T-cell (primary cell): ENCODE measurements at regions of chr2 and their contacts with region 1.

Region 1: DNA sequence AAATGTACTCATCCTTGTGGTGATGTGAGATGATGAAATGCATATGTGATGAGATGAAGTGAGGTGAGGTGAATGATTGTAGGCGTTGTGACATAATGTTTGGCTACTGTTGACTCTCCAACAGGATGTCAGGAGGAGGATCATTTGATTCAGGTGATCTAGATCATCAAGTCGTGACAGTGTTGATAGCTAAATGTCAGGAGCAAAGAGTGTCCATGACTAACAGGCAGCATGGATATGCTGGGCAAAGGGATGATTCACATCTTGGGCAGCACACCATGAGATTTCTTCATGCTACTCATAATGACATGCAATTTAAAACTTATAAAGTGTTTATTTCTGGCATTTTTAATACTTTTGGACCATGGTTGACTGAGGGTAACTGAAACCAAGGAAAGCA is 40.2 kb upstream of the UBXN4 start:
- DNase-seq: no peak
- ATAC-seq: no peak
- H3K4me3 ChIP-seq: no peak overlapping the region
- H3K4me3 Mint-ChIP-seq: no peak overlapping the region
- H3K27ac ChIP-seq: no peak overlapping the region
- H3K27ac Mint-ChIP-seq: no peak overlapping the region
- H3K4me1 ChIP-seq: no peaks in the 10 kb centered on the region
- H3K4me1 Mint-ChIP-seq: no peaks in the 10 kb centered on the region
- H3K27me3 ChIP-seq: no peaks in the 10 kb centered on the region
- H3K27me3 Mint-ChIP-seq: no peaks in the 10 kb centered on the region

Region 2: DNA sequence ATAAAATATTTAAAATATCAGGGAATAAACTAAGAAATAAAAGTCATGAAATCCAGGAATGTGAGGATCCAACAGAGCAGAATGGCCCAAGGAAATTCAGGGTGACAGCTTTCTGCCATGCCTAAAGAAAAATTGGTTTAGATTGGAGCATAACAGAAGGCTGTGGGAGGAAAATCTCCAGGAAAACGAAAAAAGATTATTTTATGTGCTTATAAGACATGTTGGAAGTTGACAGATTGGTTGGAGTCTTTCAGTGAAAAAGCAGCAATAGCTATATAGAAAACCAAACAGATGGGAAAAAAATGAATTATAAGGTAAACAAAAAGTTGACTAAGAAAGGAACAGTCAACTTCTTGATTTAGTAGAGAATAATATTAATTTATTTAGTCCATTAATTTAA is 374.3 kb before region 1 on chr2:
- CTCF ChIA-PET with region 1: no interaction called
- POLR2A ChIA-PET with region 1: no interaction called
- DNase-seq: no peak
- ATAC-seq: no peak
- H3K4me3 ChIP-seq: no peak overlapping the region
- H3K4me3 Mint-ChIP-seq: no peak overlapping the region
- H3K27ac ChIP-seq: no peak overlapping the region
- H3K27ac Mint-ChIP-seq: no peak overlapping the region
- H3K4me1 ChIP-seq: no peaks in the 10 kb centered on the region
- H3K4me1 Mint-ChIP-seq: no peaks in the 10 kb centered on the region
- H3K27me3 ChIP-seq: no peaks in the 10 kb centered on the region
- H3K27me3 Mint-ChIP-seq: no peaks in the 10 kb centered on the region

Region 3: GRCh38 chr2:135512099-135512498 is 189.3 kb before region 1 on chr2:
- CTCF ChIA-PET with region 1: no interaction called
- POLR2A ChIA-PET with region 1: interaction called in 1 of 2 experiments, 12 read pairs
- DNase-seq: no peak
- ATAC-seq: no peak
- H3K4me3 ChIP-seq: no peak overlapping the region
- H3K4me3 Mint-ChIP-seq: no peak overlapping the region
- H3K27ac ChIP-seq: no peak overlapping the region
- H3K27ac Mint-ChIP-seq: no peak overlapping the region
- H3K4me1 ChIP-seq: no peaks in the 10 kb centered on the region
- H3K4me1 Mint-ChIP-seq: no peaks in the 10 kb centered on the region
- H3K27me3 ChIP-seq: no peaks in the 10 kb centered on the region
- H3K27me3 Mint-ChIP-seq: no peaks in the 10 kb centered on the region